Left ventricle myocardium superior (tissue), 1 donor: ENCODE measurements at regions of chr10 and their contacts with region 1.

Region 1: DNA sequence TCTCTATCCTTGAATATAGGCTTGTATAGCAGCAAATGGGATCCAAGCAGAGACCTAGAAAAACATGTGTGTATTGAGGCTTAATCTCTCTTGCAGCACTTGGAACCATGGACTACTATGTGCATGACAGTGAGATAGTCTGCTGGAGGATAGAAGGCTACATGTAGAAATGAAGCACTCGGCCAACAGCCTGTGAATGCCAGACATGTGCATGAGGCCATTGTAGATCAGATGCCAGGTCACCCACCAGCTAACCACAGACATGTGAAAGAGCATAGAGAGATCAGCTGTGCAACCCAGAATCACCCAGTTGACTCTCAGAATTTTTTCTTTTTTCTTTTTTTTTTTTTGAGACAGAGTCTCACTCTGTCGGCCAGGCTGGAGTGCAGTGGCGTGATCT is 90.9 kb downstream of the NT5C2 start:
- DNase-seq: no peak
- ATAC-seq: peak; percentile 62

Region 2: GRCh38 chr10:103244663-103245271 is 142.6 kb after region 1 on chr10:
- intact Hi-C with region 1: loop called (anchors 10 kb)
- DNase-seq: peak; percentile 52
- ATAC-seq: peak; percentile 90

Region 3: DNA sequence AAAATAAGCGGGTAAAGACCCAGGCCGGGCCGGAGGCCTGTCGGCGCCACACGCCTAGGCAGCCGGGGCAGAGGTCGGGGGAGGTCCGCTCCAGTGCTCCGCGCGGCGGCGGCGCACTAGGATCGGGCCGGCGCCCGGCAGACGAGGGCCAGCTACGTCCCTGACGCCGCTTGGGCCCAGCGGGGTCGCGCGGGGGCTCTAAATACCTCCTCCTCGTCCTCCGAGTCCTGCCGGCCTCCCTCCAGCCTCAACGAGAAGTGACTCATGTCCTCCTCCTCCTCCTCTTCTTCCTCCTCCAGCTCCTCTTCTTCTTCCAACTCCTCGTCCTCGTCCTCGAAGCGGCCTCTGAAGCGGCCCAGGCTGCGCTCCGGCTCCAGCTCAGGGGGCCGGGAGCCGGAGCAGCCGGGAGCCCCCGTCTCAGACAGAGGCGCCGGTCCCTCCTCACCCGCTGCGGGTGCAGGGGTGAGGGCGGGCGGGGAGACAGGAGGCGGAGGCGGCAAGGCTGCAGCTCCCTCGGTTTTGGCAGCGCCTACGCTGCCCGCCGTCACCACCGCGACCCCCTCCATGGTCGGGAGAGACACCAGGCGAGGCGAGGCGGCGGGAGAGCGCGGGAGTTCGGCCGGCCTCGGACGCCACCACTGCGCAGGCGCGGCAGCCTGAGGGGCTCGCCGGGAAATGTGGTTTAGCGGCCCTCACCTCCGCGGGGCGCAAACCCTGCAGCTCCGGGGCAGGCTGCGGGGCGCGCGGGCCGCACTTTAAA is 248.5 kb after region 1 on chr10 and contains the start of gene PCGF6:
- intact Hi-C with region 1: no loop called
- DNase-seq: peak; percentile 91
- ATAC-seq: peak; percentile 99
- total RNA-seq, gene PCGF6: 5.5 TPM